Activated B cell treated with CpG ODN at 0.5 μM for 24 hours (primary cell): ENCODE measurements at regions of chrX and their contacts with region 1.

Region 1: GRCh38 chrX:71283403-71284143 is at the start of gene NONO:
- DNase-seq: peak; percentile 53
- ATAC-seq: peak; percentile 87
- H3K4me3 Mint-ChIP-seq: peak within 1 kb of the TSS; percentile 99
- H3K27ac Mint-ChIP-seq: peak within 1 kb of the TSS; percentile 99
- H3K4me1 Mint-ChIP-seq: peaks cover 18% of the 10 kb centered on the region
- H3K27me3 Mint-ChIP-seq: no peaks in the 10 kb centered on the region
- CTCF ChIP-seq: no peak
- total RNA-seq, gene NONO: 398 and 462 TPM in 2 replicates

Region 2: GRCh38 chrX:70769659-70770232 is 513.8 kb before region 1 on chrX:
- CTCF ChIA-PET with region 1: no interaction called
- POLR2A ChIA-PET with region 1: no interaction called
- intact Hi-C with region 1: loop called (anchors 10 kb)
- DNase-seq: no peak
- ATAC-seq: no peak
- H3K4me3 Mint-ChIP-seq: no peak overlapping the region
- H3K27ac Mint-ChIP-seq: no peak overlapping the region
- H3K4me1 Mint-ChIP-seq: no peaks in the 10 kb centered on the region
- H3K27me3 Mint-ChIP-seq: no peaks in the 10 kb centered on the region
- CTCF ChIP-seq: no peak

Region 3: DNA sequence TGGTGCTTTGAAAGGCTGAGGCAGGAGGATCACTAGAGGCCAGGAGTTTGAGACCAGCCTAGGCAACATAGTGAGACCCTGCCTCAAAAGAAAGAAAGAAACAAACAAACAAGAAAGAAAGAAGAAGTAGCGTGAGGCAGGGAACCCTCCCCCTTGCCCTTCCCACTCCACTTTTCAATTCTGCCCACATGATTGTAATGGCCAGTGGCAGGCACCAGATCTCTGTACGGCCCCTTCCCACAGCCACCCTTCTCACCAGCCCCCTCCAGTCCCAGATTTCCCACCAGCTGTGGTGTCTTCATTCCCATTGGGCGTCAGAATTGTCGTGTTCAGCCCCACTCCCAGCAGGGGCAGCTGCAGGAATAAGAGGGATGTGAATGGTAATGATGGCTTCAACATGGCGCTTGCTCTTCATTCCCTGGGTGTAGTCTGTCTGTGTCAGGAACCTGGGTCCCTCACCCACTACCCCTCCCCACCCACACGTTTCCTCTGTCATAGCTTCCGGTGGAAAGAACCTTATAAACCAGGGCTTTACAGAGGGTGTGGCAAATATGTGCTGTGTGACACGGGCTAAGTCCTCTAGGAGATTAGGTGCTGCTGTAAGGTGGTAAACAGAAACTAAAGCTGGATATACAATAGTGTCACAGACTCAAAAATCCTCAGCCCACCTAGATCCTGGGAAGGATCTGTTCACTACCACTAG is 172.3 kb before region 1 on chrX and contains the start of gene IL2RG:
- CTCF ChIA-PET with region 1: no interaction called
- POLR2A ChIA-PET with region 1: interaction called, 7 read pairs
- intact Hi-C with region 1: loop called (anchors 1 kb)
- DNase-seq: peak; percentile 37
- ATAC-seq: peak; percentile 90
- H3K4me3 Mint-ChIP-seq: peak within 1 kb of the TSS; percentile 95
- H3K27ac Mint-ChIP-seq: peak within 1 kb of the TSS; percentile 99
- H3K4me1 Mint-ChIP-seq: peaks cover 67% of the 10 kb centered on the region
- H3K27me3 Mint-ChIP-seq: no peaks in the 10 kb centered on the region
- CTCF ChIP-seq: no peak
- total RNA-seq, gene IL2RG: 261 and 264 TPM in 2 replicates

Region 4: DNA sequence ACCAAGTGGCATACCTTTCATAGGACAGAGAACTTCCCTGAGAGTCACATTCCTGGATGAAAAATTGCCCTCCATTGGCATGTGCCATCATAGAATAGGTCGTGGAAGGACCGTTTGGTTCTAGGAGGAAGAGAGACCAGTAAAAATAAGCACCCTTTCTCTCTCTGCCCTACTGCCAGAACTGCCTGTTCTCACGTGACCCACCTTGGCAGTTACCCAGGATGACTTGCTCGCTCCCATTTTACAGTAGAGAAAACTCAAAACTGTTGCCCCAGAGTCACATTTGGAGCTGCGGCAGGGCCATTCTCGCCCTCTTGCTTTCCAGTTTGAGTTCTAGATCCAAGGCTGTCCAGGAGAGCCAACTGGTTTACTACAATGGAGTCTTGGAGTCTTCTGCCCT is 140.1 kb before region 1 on chrX:
- CTCF ChIA-PET with region 1: no interaction called
- POLR2A ChIA-PET with region 1: no interaction called
- intact Hi-C with region 1: no loop called
- DNase-seq: no peak
- ATAC-seq: no peak
- H3K4me3 Mint-ChIP-seq: no peak overlapping the region
- H3K27ac Mint-ChIP-seq: no peak overlapping the region
- H3K4me1 Mint-ChIP-seq: peaks cover 14% of the 10 kb centered on the region
- H3K27me3 Mint-ChIP-seq: no peaks in the 10 kb centered on the region
- CTCF ChIP-seq: no peak

Region 5: DNA sequence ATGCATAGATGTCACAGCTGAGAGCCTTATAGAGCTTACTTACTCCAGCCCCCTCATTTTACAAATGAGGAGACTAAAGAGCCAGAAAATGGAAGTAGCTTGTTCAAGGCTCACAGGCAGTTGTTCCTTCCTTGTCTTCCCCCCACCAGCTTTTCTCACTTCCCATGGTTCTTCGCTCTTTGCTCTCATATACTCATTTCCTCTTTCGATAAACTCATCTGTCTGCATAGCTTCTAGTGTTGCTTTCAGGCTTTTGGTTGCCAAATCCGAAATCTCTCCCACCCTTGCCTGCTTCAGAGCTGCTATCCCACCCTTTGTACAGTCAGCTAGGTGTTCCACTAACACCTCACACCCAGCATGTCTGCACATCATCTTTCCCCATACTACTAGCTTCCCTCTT is 85.5 kb before region 1 on chrX:
- CTCF ChIA-PET with region 1: interaction called, 4 read pairs
- POLR2A ChIA-PET with region 1: interaction called, 34 read pairs
- intact Hi-C with region 1: loop called (anchors 1 kb)
- DNase-seq: peak; percentile 13
- ATAC-seq: peak; percentile 84
- H3K4me3 Mint-ChIP-seq: peak overlapping the region; percentile 95
- H3K27ac Mint-ChIP-seq: peak overlapping the region; percentile 95
- H3K4me1 Mint-ChIP-seq: peaks cover 32% of the 10 kb centered on the region
- H3K27me3 Mint-ChIP-seq: no peaks in the 10 kb centered on the region
- CTCF ChIP-seq: no peak

Region 6: DNA sequence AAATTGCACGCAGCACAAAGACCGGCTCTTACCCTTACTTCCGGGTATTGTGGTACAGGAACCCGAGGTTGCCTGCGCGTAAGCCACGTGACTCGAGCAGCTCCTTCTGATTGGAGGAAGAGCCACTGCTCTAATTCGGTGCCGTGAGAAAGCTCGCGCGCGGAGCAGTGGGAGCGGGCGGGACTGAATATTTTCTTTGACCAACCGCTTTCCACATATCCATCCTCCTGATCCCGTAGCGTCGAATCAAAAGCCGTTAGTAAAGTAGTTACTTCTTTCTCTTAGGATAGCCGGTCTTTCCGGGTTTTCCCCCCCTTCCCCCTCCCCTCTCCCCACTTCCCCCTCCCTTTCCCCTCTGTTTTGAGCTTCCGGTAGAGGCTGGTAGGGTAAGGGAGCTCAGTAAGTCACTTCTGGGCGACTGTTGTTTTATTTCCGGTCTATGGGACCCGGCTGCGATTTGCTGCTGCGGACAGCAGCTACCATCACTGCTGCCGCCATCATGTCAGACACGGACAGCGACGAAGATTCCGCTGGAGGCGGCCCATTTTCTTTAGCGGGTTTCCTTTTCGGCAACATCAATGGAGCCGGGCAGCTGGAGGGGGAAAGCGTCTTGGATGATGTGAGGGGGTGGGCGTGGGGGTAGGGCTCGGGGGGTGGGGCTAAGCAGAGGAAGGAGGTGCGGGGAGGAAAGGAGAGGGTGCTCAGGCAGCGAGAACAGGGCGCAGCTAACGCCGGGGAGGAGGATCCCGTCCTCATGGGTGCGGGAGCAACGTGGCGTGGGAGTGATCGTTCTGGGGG is 82.5 kb after region 1 on chrX and contains the start of gene TAF1:
- CTCF ChIA-PET with region 1: no interaction called
- POLR2A ChIA-PET with region 1: interaction called, 68 read pairs
- intact Hi-C with region 1: loop called (anchors 1 kb)
- DNase-seq: peak; percentile 69
- ATAC-seq: peak; percentile 87
- H3K4me3 Mint-ChIP-seq: peak within 1 kb of the TSS; percentile 99
- H3K27ac Mint-ChIP-seq: peak within 1 kb of the TSS; percentile 99
- H3K4me1 Mint-ChIP-seq: peaks cover 21% of the 10 kb centered on the region
- H3K27me3 Mint-ChIP-seq: no peaks in the 10 kb centered on the region
- CTCF ChIP-seq: no peak
- total RNA-seq, gene TAF1: 64.0 and 70.0 TPM in 2 replicates

Region 7: GRCh38 chrX:71492231-71493065 is 208.9 kb after region 1 on chrX:
- CTCF ChIA-PET with region 1: no interaction called
- POLR2A ChIA-PET with region 1: no interaction called
- intact Hi-C with region 1: no loop called
- DNase-seq: no peak
- ATAC-seq: no peak
- H3K4me3 Mint-ChIP-seq: no peak overlapping the region
- H3K27ac Mint-ChIP-seq: no peak overlapping the region
- H3K4me1 Mint-ChIP-seq: no peaks in the 10 kb centered on the region
- H3K27me3 Mint-ChIP-seq: no peaks in the 10 kb centered on the region
- CTCF ChIP-seq: no peak